ENCODE measurements at regions of chr5 and their contacts with region 1.

Region 1: DNA sequence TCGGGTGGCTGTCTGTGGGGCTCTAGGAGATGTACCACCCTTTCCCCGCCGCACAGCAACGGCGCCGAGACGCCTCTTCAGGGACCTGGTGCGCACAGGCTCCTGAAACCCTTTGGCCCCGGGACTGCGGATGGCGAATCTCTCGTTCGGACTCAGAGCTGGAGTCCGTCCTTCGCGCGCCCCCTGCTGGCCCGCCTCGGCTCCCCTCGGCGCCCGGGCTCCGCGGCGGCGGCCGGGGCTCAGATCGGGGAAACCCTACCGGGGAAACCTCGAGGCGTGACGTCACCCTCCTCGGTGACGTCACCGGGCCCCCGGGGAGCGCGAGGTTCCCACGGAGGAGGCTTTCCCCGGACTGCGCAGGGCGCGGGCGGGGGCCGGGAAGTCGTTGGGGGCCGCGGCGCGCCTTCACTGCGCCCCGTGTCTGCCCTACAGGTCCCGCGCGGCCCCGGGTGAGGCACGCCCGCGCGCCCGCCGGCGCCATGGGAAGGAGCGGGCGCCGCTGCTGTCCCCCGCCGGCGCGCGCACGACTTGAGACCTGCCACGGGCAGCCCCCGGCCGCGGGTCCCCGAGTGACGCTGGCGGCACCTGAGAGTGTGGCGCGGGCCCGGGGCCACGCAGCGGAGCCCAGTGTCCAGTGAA is 7.9 kb downstream of the PRR7 start:
- DNase-seq: peak; percentile 98

Region 2: GRCh38 chr5:176959051-176959450 is 495.5 kb before region 1 on chr5:
- intact Hi-C with region 1: no loop called
- DNase-seq: no peak

Region 3: GRCh38 chr5:177403792-177404640 is 50.5 kb before region 1 on chr5:
- intact Hi-C with region 1: loop called (anchors 5 kb)
- DNase-seq: peak; percentile 96

Region 4: DNA sequence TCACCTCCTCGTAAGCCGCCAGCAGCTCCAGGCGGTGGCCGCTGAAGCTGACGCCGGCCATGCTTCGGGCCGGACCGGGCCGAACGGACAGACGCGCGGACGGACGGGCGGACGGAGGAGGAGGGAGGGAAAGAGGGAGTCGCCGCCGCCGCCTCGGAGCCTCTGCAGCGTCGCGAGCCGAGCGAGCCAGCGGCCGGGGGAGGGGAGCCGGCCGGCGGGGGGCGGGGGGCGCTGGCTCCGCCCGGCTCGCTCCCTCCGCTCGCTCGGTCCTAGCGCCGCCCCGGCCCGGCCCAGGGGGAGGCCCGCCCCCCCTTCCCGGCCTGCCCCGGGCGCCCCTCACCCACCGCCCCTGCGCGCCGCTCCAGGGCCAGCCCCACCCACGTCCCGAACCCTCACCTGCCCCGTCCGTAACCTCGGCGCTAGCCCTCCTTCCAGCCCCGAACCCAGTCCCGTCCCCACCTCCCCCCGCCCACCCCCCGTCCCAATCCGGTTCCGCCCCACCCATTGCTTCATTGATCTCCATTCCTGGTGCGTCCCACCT is 19.0 kb after region 1 on chr5 and contains the start of gene DBN1:
- intact Hi-C with region 1: loop called in 1 of 2 experiments (anchors 2 kb)
- DNase-seq: no peak
- total RNA-seq, gene DBN1: 94.9 to 121 TPM

Region 5: DNA sequence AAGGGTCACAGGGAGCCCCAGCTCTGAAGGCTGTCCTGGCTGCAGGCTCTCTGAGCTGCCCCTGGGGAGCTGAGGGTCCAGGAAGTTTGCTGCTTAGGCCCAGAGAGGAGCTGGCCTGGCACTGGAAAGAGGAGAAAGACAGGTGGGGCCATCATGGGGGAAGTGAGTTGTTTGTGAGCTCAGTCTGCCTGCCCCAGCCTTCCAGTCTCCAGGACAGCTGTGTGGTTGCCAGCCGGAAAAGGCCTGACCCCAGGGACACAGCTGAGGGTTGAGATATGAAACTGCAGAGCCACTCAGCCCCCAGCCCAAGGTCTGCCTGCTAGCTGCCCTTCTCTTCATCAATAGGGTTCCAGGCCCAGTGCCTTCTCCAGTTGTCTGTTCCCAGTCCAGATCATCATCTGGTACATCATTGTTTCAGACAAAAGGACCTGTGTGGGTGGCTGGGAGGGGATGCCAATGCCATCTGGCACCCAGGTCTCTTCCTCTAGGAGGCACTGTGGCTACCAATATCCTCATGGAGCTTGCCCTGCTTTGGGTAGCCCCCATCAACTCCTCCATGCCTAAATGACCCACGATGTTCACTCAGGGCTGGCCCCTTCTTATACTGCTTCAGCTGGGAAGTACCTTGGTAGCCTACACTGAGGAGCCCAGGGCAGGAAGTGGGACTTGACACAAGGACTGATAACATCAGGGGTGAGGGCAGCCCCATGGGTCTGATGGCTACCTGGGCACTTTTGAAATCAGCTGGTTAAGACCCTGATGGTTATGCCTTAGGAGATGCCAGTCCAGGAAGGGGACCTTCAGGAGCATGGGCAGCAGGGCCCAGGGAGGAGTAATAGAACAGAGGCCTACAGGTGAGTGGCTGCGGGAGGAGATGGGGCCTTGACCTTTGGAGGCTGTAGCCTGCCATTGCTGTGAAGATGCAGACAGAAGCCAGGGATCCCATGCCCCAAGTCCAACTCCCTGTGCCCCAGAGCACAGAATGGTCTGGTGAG is 66.7 kb after region 1 on chr5:
- intact Hi-C with region 1: no loop called
- DNase-seq: peak; percentile 62